ENCODE measurements at regions of chr15 and their contacts with region 1.

Region 1: DNA sequence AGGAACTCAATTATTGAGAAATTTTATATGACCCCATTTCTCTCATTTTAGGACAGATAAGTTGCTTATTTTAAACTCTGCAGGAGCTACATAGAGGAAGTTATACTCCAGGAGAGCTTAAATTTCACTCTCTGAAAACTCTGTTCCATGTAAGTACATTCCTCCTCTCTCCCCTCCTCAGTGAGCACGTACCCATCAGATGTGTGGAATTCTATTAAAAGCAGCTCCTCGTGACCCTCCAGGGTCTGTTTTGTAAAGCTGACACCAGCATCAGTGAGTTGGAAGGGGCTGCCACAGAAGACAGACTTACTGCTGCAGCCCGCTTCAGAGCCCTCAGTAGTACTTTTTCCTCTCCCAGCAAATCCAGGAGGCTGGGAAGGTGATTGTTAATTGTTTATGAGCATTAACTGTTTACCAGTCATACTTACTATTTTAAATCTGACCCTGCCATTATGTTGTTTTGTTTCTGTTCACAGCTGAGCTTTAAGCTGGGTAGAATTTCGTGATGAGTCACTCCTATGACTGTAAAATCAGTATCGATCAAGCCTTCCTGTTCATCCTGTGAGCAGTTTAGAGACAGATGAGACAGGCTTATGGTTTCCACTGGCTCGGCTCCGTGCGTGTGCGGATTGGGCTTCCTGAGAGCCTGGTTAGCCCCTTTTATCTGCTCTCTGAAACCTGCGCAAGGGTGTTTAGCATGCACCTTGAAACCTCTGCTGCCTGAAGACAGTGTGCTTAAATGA is 20.4 kb downstream of the IGF1R start:
- DNase-seq: no peak
- H3K4me3 ChIP-seq: no peak overlapping the region
- H3K27ac ChIP-seq: no peak overlapping the region
- H3K4me1 ChIP-seq: peaks cover 76 to 96% (median 86%) of the 10 kb centered on the region in 4 donors
- H3K27me3 ChIP-seq: no peaks in the 10 kb centered on the region
- CTCF ChIP-seq: no peak
- EP300 ChIP-seq: no peak
- POLR2A ChIP-seq: no peak

Region 2: GRCh38 chr15:98123834-98124474 is 544.8 kb before region 1 on chr15:
- intact Hi-C with region 1: no loop called
- DNase-seq: no peak
- H3K4me3 ChIP-seq: no peak overlapping the region
- H3K27ac ChIP-seq: no peak overlapping the region
- H3K4me1 ChIP-seq: no peaks in the 10 kb centered on the region
- H3K27me3 ChIP-seq: peaks cover 0 to 5% (median 0%) of the 10 kb centered on the region in 4 donors
- CTCF ChIP-seq: no peak
- EP300 ChIP-seq: no peak
- POLR2A ChIP-seq: no peak

Region 3: GRCh38 chr15:98734466-98735199 is 65.9 kb after region 1 on chr15:
- intact Hi-C with region 1: loop called (anchors 5 kb)
- DNase-seq: no peak
- H3K4me3 ChIP-seq: no peak overlapping the region
- H3K27ac ChIP-seq: peak overlapping the region in 2 of 4 donors; percentile 6 to 11
- H3K4me1 ChIP-seq: peaks cover 41 to 83% (median 59%) of the 10 kb centered on the region in 4 donors
- H3K27me3 ChIP-seq: no peaks in the 10 kb centered on the region
- CTCF ChIP-seq: no peak
- EP300 ChIP-seq: no peak
- POLR2A ChIP-seq: no peak